Activated B cell treated with CpG ODN at 0.5 μM for 24 hours (primary cell): ENCODE measurements at regions of chr3 and their contacts with region 1.

Region 1: GRCh38 chr3:102104033-102104432 is 254.7 kb downstream of the NFKBIZ start:
- DNase-seq: no peak
- ATAC-seq: no peak
- H3K4me3 Mint-ChIP-seq: no peak overlapping the region
- H3K27ac Mint-ChIP-seq: no peak overlapping the region
- H3K4me1 Mint-ChIP-seq: no peaks in the 10 kb centered on the region
- H3K27me3 Mint-ChIP-seq: no peaks in the 10 kb centered on the region
- CTCF ChIP-seq: no peak

Region 2: GRCh38 chr3:102136183-102136582 is 32.1 kb after region 1 on chr3:
- CTCF ChIA-PET with region 1: no interaction called
- POLR2A ChIA-PET with region 1: no interaction called
- intact Hi-C with region 1: loop called (anchors 5 kb)
- DNase-seq: no peak
- ATAC-seq: peak; percentile 37
- H3K4me3 Mint-ChIP-seq: no peak overlapping the region
- H3K27ac Mint-ChIP-seq: no peak overlapping the region
- H3K4me1 Mint-ChIP-seq: peaks cover 27% of the 10 kb centered on the region
- H3K27me3 Mint-ChIP-seq: no peaks in the 10 kb centered on the region
- CTCF ChIP-seq: no peak

Region 3: DNA sequence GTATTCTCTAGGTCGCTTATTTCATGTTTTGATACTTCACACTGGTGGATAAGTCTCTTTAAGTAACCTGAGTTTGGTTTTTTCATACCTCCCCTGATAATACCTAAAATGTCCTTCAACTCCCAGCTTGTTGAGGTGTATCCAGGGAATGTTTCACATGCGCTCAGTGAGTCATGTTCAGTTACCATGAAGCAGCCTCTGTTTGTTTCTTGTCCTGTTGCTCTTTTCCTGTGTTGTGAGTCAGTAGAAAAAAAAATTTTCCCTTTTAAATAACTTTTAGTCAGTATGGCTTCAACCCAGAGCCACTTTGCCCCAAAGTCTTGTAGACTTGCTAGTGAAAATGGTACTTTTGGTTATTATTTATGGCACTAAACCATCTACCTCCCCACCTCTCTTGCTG is 52.4 kb after region 1 on chr3:
- CTCF ChIA-PET with region 1: no interaction called
- POLR2A ChIA-PET with region 1: no interaction called
- intact Hi-C with region 1: no loop called
- DNase-seq: no peak
- ATAC-seq: no peak
- H3K4me3 Mint-ChIP-seq: no peak overlapping the region
- H3K27ac Mint-ChIP-seq: no peak overlapping the region
- H3K4me1 Mint-ChIP-seq: peaks cover 15% of the 10 kb centered on the region
- H3K27me3 Mint-ChIP-seq: no peaks in the 10 kb centered on the region
- CTCF ChIP-seq: no peak

Region 4: DNA sequence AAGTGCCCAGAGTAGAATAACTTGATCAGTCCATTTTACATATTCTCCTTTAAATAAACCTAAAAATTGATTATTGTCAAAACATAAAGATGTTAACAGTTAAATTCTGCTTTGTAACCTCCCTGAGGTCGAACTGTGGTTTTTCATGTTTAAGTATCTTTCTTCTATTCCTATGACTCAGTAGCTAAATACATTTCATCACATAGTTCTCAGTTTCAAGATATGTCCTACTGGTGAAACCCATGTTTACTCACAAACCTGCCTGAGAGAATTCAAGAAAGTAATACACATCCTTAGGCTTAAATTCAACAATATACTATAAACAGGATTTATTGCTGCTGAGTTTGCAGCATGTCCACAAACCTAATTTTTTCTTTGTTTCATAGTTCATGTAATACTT is 1023.7 kb after region 1 on chr3:
- CTCF ChIA-PET with region 1: no interaction called
- POLR2A ChIA-PET with region 1: no interaction called
- intact Hi-C with region 1: no loop called
- DNase-seq: no peak
- ATAC-seq: no peak
- H3K4me3 Mint-ChIP-seq: no peak overlapping the region
- H3K27ac Mint-ChIP-seq: no peak overlapping the region
- H3K4me1 Mint-ChIP-seq: no peaks in the 10 kb centered on the region
- H3K27me3 Mint-ChIP-seq: no peaks in the 10 kb centered on the region
- CTCF ChIP-seq: no peak